A673 (cell line): ENCODE measurements at regions of chr12 and their contacts with region 1.

Region 1: DNA sequence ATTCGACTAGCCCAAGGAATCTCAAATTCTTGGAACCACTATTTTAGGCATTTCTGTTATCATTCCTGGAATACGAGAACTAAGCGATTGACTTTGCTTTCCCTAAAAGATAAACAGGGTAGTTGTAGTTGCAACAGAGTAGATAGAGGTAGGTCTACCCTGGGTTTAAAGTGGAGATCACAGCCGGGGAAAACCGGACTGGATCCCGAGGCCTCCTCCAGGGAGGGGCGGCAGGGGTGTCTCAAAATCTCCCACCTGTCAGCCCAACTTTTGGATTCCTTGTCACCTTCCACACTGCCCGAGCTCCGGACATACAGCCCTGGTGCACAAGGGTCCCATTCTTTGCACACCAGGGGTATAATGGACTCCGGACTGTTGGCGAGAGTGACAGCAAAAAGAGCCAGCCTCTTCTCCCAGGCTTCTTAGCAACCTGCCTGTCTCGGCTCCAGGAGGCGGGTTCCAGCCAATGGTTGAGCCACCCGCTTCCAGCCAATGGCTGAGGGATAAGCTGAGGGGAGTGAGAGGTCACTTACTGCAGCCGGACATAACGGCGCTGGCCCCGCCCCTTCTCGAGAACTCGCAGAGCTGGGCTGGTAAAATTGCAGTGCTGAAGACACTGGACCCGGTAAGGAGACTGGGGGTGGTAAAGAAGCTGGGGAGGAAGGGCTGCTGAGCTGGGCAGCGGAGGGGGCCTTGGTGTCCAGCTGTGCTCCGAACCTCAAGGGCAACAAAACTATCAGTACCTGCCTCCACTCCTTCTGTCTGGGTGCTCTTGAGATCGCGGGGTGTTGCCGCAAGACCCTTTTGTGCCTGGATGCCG is at the start of gene SUOX:
- DNase-seq: peak; percentile 59
- H3K4me3 ChIP-seq: peak within 1 kb of the TSS; percentile 42
- H3K27ac ChIP-seq: no peak within 1 kb of the TSS
- H3K4me1 ChIP-seq: peaks cover 3% of the 10 kb centered on the region
- H3K27me3 ChIP-seq: no peaks in the 10 kb centered on the region
- CTCF ChIP-seq: no peak
- total RNA-seq, gene SUOX: 2.2 and 5.0 TPM in 2 replicates

Region 2: DNA sequence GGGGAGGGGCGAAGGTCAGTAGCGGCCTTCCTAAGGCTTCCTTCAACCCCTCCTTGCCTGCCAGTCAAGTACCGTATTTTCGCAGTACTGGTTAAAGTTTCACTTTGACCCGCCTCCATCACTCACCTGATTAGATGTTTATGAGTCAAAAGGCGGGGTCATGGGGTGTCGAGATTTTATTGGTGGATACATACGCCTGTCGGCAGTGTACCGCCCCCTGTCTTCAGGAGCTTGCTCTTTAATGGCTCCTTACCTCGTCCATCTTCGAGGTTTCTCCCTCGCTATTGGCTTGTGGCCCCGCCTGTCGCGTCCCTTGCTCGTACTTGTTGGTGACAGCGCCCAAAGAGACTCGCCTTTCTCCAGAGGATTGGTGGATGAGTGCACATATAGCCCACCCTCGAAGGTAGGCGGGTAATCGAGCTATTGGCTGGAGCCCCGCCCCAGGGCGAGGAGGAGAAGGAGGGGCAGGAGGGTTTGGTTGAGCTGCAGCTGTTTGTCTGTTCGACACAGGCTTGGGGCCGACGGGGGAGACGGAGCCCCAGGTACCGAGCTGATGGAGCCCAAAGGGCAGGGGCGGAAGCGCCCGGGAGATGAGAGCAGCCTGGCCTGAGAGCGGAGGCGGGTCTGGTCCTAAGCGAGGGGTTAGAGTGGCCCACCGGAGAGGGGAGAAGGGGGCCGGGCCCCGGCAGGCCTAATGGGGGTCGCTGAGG is 23.2 kb before region 1 on chr12 and contains the start of gene RAB5B:
- CTCF ChIA-PET with region 1: interaction called, 13 read pairs
- POLR2A ChIA-PET with region 1: no interaction called
- intact Hi-C with region 1: no loop called
- DNase-seq: peak; percentile 100
- H3K4me3 ChIP-seq: peak within 1 kb of the TSS; percentile 92
- H3K27ac ChIP-seq: peak within 1 kb of the TSS; percentile 81
- H3K4me1 ChIP-seq: peaks cover 8% of the 10 kb centered on the region
- H3K27me3 ChIP-seq: no peaks in the 10 kb centered on the region
- CTCF ChIP-seq: no peak
- total RNA-seq, gene RAB5B: 73.9 and 78.1 TPM in 2 replicates

Region 3: GRCh38 chr12:56029666-56030293 is 32.9 kb after region 1 on chr12:
- CTCF ChIA-PET with region 1: interaction called, 11 read pairs
- POLR2A ChIA-PET with region 1: no interaction called
- intact Hi-C with region 1: loop called (anchors 2 kb)
- DNase-seq: peak; percentile 73
- H3K4me3 ChIP-seq: no peak overlapping the region
- H3K27ac ChIP-seq: no peak overlapping the region
- H3K4me1 ChIP-seq: no peaks in the 10 kb centered on the region
- H3K27me3 ChIP-seq: no peaks in the 10 kb centered on the region
- CTCF ChIP-seq: peak; percentile 82

Region 4: DNA sequence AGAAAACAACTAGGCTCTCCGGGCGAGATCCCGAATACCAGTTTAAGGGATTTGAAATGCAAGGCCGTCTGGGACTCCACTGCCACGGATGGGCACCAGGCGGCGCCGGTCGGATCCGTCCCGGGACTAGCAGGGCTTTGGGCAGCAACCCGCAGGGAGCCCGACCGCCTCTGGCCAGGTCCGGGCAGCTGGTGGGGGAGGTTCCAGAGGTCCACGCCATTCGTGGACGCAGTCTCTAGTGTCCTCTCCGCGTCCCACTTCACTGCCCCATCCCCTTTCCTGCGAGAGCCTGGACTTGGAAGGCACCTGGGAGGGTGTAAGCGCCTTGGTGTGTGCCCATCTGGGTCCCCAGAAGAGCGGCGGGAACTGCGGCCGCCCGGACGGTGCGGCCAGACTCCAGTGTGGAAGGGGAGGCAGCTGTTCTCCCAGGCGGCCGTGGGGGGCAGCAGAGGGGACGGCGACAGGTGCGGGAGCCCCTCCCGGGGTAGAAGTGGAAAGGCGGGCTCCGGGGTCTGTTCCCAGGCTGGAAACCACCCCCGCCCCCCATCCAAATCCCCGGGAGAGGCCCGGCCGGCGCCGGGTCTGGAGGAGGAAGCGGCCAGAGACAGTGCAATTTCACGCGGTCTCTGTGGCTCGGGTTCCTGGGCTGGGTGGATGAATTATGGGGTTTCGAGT is 82.2 kb after region 1 on chr12:
- CTCF ChIA-PET with region 1: interaction called, 12 read pairs
- POLR2A ChIA-PET with region 1: no interaction called
- intact Hi-C with region 1: no loop called
- DNase-seq: peak; percentile 76
- H3K4me3 ChIP-seq: peak overlapping the region; percentile 59
- H3K27ac ChIP-seq: no peak overlapping the region
- H3K4me1 ChIP-seq: no peaks in the 10 kb centered on the region
- H3K27me3 ChIP-seq: no peaks in the 10 kb centered on the region
- CTCF ChIP-seq: peak; percentile 75